Posterior vena cava (tissue), 2 donors: ENCODE measurements at regions of chr17 and their contacts with region 1.

Region 1: DNA sequence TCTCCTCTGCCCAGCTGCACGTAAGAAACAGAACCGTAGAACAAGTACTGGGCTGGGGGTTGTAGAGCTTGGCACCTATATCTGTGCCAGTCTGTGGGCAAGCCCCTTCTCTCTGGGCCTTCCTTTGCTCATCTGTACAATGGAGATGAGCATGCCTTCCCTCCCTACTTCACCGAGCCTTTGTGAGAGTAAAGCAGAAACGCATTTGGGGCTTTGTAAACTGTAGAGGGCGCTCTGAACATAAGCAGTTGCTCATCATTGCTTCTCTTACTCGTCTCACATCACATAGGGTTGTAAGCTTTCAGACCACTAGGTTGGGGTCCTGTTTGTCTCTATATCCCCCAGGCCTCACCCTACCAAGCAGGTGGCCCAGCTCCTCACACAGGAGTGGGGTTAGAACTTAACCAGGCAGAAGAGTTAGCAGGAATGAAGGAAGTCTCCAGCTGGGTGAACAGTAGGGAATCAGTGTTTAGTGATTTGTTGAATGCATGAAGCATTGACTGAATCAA is 15.1 kb downstream of the SAMD14 start:
- DNase-seq: no peak

Region 2: DNA sequence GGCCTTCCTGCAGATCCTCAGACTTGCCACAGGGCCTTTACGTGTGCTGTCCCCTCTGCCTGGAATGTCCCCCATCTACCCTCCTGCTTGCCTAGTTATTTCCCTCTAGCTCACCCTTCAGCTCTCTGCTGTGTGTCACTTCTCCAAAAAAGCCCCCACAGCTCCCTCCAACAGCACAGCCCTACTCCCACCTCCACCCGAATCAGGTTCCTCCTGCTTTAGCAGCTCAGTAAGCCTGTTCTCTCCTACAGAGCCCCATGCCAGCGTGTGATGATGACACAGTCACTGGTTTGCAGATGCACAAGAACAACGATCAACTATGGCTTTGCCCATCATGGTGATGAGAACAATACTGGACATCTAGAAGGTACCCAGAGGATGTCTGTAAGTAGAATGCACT is 22.1 kb after region 1 on chr17:
- intact Hi-C with region 1: loop called in 1 of 2 experiments (anchors 1 kb)
- DNase-seq: no peak

Region 3: DNA sequence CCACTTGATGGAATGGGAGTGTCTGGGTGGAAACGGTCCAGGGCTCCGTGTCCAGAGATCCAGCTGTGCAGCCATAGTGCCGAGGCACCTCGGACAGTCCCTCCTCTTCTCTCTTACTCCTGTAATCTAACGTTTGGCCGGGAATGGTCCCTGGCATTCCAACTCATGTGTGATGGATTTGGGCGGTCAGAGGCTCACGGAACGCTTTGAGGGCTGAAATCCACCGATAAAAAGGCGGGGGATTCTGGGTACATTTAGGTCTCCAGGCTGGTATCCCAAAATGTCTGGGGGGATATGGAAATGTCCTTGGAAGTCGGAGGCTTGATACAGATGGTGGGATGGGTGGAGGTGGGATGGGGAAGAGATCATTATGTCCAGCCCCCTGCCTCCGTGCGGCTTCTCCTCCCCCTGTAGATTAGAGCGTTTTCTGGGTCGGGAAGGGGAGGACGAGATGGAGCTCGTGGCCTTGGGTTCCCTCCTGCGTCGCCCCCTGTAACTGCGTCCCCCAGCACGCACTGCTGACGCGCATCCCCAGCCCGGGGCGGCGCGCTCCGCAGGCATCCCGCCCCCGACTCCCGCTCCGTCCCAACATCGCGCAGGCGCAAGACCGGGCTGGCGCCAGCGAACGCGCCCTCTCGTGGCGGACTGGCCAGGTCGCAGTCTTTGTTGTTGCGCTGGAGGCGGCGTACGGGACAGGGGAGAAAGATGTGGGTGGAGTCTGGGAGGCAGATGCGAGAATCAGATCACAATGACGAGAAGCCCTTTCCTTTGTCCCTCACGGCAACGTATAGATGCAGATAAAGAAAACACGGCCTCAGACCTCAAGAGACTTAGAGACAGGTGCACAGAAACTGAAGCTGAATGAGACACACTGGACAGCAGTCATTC is 46.4 kb after region 1 on chr17:
- intact Hi-C with region 1: loop called in 1 of 2 experiments (anchors 10 kb)
- DNase-seq: peak; percentile 97